Head of caudate nucleus (tissue), 42 donors: ENCODE measurements at regions of chr7 and their contacts with region 1.

Region 1: DNA sequence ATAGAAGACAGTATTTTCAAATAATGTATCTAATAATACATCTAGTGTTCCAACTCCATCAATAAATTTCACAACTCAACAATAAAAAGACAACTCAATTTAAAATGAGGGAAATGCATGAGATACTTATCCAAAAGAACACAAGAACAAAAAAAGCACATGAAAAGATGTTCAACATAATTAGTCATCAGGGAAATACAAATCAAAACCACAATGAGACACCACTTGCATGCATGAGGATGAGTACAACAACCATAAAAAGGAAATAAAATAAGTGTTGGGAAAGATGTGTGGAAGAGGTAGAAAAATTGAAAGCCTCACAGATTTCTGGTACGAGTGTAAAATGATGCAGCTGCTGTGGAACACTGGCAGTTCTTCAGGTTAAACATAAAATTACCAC is 111.6 kb upstream of the PTPRZ1 start:
- DNase-seq: no peak

Region 2: DNA sequence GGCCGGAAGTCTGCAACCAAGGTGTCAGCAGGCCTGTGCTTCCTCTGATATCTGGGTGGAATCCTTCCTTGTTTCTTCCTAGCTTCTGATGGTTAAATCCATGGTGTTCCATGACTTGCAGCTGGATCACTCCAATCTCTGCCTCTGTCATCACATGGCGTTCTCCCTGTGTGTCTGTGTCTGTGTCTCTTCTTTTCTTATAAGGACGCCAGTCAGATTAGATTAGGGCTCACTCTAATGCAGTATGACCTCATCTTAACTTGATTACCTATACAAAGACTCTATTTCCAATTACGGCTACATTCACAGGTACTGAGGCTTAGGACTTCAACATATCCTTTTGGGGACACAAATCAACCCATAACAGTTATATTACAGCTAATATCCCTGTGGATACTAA is 294.9 kb before region 1 on chr7:
- intact Hi-C with region 1: no loop called
- DNase-seq: no peak

Region 3: GRCh38 chr7:121519548-121520521 is 241.6 kb before region 1 on chr7:
- intact Hi-C with region 1: no loop called
- DNase-seq: peak in 2 of 42 donors; percentile 3 to 9

Region 4: DNA sequence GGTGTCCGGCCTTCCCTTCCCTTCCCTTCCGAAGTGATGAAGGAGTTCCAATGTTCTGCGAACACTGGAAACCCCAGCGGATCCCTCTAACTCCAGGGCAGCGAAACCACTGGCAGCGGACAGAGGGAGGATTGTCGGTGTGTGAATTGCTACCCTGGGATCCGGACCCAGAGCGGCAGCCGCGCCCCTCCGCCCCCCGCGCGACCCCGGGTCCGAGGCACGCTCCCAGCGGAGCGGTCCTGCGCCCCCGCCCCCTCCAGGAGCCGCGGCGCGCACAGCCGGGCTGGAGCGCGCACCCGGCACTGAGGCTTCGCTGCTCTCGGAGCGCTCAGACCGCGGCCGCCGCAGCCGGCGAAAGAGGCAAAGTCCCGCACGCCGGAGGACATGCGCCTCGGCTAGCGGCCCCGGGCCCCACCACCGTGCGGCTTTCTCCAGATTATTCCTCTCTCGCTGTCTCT is 111.5 kb after region 1 on chr7 and contains the start of gene PTPRZ1:
- intact Hi-C with region 1: loop called (anchors 10 kb)
- DNase-seq: peak in 40 of 42 donors; percentile 7 to 68 (median 43)